ENCODE measurements at regions of chr12 and their contacts with region 1.

Region 1: DNA sequence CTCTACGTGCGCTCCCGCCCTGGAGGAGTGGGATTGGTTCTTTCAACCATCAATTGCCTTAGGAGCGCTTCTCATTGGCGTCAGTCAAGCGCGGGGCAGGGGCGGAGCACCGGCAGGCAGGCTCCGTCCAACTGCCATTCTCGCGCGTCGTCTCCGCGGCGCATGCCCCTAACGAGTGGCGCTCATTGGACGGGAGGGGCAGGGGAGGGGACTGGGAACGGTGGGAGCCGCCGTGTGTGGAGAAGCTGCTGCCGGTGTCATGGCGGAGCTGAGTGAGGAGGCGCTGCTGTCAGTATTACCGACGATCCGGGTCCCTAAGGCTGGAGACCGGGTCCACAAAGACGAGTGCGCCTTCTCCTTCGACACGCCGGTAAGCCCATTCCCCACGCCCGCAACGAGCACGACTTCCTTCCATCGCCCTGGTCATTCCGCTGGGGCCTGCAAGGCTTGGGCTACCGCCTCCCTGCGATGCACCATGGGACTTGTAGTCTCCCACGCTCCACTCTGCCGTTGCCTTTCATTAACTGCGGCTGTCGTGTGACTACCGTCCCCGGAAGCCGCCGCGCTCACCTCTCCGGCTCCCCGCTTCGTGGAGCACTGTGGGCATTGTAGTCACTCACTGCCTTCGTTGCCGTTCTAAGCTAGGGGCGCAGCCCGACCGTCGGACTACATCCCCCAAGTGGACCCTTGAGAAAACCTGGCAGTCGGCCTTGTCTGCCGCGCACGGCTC is at the start of gene USP5:
- DNase-seq: peak; percentile 91
- ATAC-seq: peak; percentile 78
- H3K4me3 Mint-ChIP-seq: peak within 1 kb of the TSS; percentile 100
- H3K27ac Mint-ChIP-seq: peak within 1 kb of the TSS; percentile 99
- H3K4me1 Mint-ChIP-seq: peaks cover 30% of the 10 kb centered on the region
- H3K27me3 Mint-ChIP-seq: no peaks in the 10 kb centered on the region
- CTCF ChIP-seq: no peak
- total RNA-seq, gene USP5: 108 and 110 TPM in 2 replicates

Region 2: GRCh38 chr12:6507102-6507998 is 344.7 kb before region 1 on chr12:
- CTCF ChIA-PET with region 1: no interaction called
- POLR2A ChIA-PET with region 1: no interaction called
- intact Hi-C with region 1: no loop called
- DNase-seq: no peak
- ATAC-seq: no peak
- H3K4me3 Mint-ChIP-seq: no peak overlapping the region
- H3K27ac Mint-ChIP-seq: no peak overlapping the region
- H3K4me1 Mint-ChIP-seq: no peaks in the 10 kb centered on the region
- H3K27me3 Mint-ChIP-seq: no peaks in the 10 kb centered on the region
- CTCF ChIP-seq: no peak

Region 3: GRCh38 chr12:6607751-6608591 is 244.1 kb before region 1 on chr12:
- CTCF ChIA-PET with region 1: no interaction called
- POLR2A ChIA-PET with region 1: interaction called, 6 read pairs
- intact Hi-C with region 1: loop called (anchors 1 kb)
- DNase-seq: no peak
- ATAC-seq: peak; percentile 31
- H3K4me3 Mint-ChIP-seq: no peak overlapping the region
- H3K27ac Mint-ChIP-seq: no peak overlapping the region
- H3K4me1 Mint-ChIP-seq: peaks cover 64% of the 10 kb centered on the region
- H3K27me3 Mint-ChIP-seq: no peaks in the 10 kb centered on the region
- CTCF ChIP-seq: no peak

Region 4: DNA sequence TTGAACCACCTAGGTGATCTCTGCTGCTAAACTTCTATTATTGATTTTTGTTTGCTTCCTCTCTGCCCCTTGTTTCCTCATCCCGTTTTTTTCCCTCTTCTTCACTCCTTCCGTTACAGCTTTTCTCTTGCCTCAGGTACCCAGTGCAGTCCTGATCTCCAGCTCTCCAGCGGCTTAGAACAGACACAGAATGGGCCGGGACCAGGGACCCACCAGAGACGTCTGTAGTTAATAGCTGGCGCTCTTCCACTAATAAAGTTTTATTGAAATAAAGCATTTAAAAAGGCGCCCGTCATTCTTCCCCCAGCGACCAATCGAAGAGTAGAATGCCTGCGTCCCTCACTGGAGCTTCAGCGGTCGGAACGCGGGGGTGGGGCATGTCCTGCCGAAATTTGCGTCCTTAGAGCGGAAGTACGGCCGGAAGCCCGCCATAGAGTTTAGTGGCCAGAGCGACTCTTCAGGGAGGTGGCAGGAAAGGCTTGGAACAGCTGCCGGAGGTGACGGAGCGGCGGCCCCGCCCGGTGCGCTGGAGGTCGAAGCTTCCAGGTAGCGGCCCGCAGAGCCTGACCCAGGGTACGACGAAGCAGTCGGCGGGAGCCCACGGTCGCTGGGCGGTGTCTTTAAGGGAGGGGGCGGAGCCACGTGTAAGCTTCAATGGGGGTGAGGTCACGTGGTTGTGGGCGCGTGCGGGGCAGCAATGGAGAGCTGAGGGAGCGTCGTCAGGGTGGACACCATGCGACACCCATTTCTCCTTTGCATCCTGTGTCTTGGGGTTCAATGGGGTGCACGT is 128.3 kb before region 1 on chr12 and contains the start of gene COPS7A:
- CTCF ChIA-PET with region 1: no interaction called
- POLR2A ChIA-PET with region 1: interaction called, 11 read pairs
- intact Hi-C with region 1: loop called (anchors 1 kb)
- DNase-seq: peak; percentile 92
- ATAC-seq: peak; percentile 93
- H3K4me3 Mint-ChIP-seq: peak within 1 kb of the TSS; percentile 89
- H3K27ac Mint-ChIP-seq: peak within 1 kb of the TSS; percentile 96
- H3K4me1 Mint-ChIP-seq: peaks cover 19% of the 10 kb centered on the region
- H3K27me3 Mint-ChIP-seq: no peaks in the 10 kb centered on the region
- CTCF ChIP-seq: no peak
- total RNA-seq, gene COPS7A: 28.1 and 35.8 TPM in 2 replicates

Region 5: GRCh38 chr12:6833189-6833890 is 18.7 kb before region 1 on chr12:
- CTCF ChIA-PET with region 1: interaction called, 12 read pairs
- POLR2A ChIA-PET with region 1: interaction called, 15 read pairs
- intact Hi-C with region 1: loop called (anchors 2 kb)
- DNase-seq: no peak
- ATAC-seq: no peak
- H3K4me3 Mint-ChIP-seq: no peak overlapping the region
- H3K27ac Mint-ChIP-seq: no peak overlapping the region
- H3K4me1 Mint-ChIP-seq: peaks cover 11% of the 10 kb centered on the region
- H3K27me3 Mint-ChIP-seq: peaks cover 25% of the 10 kb centered on the region
- CTCF ChIP-seq: no peak

Region 6: GRCh38 chr12:6890789-6891645 is 38.9 kb after region 1 on chr12:
- CTCF ChIA-PET with region 1: interaction called, 8 read pairs
- POLR2A ChIA-PET with region 1: interaction called, 30 read pairs
- intact Hi-C with region 1: loop called (anchors 1 kb)
- DNase-seq: peak; percentile 97
- ATAC-seq: peak; percentile 93
- H3K4me3 Mint-ChIP-seq: peak overlapping the region; percentile 84
- H3K27ac Mint-ChIP-seq: peak overlapping the region; percentile 93
- H3K4me1 Mint-ChIP-seq: peaks cover 15% of the 10 kb centered on the region
- H3K27me3 Mint-ChIP-seq: no peaks in the 10 kb centered on the region
- CTCF ChIP-seq: peak; percentile 65

Region 7: GRCh38 chr12:6925540-6926279 is 73.6 kb after region 1 on chr12:
- CTCF ChIA-PET with region 1: no interaction called
- POLR2A ChIA-PET with region 1: no interaction called
- intact Hi-C with region 1: no loop called
- DNase-seq: no peak
- ATAC-seq: no peak
- H3K4me3 Mint-ChIP-seq: peak overlapping the region; percentile 11
- H3K27ac Mint-ChIP-seq: no peak overlapping the region
- H3K4me1 Mint-ChIP-seq: peaks cover 64% of the 10 kb centered on the region
- H3K27me3 Mint-ChIP-seq: no peaks in the 10 kb centered on the region
- CTCF ChIP-seq: no peak

Region 8: GRCh38 chr12:6965026-6965661 is 113.1 kb after region 1 on chr12:
- CTCF ChIA-PET with region 1: no interaction called
- POLR2A ChIA-PET with region 1: interaction called, 7 read pairs
- intact Hi-C with region 1: loop called (anchors 1 kb)
- DNase-seq: peak; percentile 76
- ATAC-seq: peak; percentile 64
- H3K4me3 Mint-ChIP-seq: peak overlapping the region; percentile 11
- H3K27ac Mint-ChIP-seq: peak overlapping the region; percentile 86
- H3K4me1 Mint-ChIP-seq: peaks cover 69% of the 10 kb centered on the region
- H3K27me3 Mint-ChIP-seq: no peaks in the 10 kb centered on the region
- CTCF ChIP-seq: no peak

Region 9: DNA sequence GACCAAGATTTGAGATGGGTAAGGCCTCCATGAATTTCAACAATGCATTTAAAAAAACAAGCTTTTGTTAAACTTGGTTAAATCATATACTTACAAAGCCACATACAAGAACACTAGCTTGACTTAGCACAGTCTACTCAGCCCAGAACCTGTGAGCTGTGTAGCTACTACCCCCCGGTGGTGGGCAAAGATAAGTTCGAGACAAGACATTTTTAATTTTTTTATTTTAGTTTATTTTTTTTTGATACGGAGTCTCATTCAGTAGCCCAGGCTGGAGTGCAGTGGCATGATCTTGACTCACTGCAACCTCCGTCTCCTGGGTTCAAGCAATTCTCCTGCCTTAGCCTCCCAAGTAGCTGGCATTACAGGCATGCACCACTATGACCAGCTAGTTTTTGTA is 1226.3 kb after region 1 on chr12:
- CTCF ChIA-PET with region 1: no interaction called
- POLR2A ChIA-PET with region 1: no interaction called
- intact Hi-C with region 1: loop called (anchors 5 kb)
- DNase-seq: no peak
- ATAC-seq: no peak
- H3K4me3 Mint-ChIP-seq: no peak overlapping the region
- H3K27ac Mint-ChIP-seq: no peak overlapping the region
- H3K4me1 Mint-ChIP-seq: peaks cover 38% of the 10 kb centered on the region
- H3K27me3 Mint-ChIP-seq: peaks cover under 1% of the 10 kb centered on the region
- CTCF ChIP-seq: no peak